AG04449 (cell line): ENCODE measurements at regions of chr1 and their contacts with region 1.

Region 1: DNA sequence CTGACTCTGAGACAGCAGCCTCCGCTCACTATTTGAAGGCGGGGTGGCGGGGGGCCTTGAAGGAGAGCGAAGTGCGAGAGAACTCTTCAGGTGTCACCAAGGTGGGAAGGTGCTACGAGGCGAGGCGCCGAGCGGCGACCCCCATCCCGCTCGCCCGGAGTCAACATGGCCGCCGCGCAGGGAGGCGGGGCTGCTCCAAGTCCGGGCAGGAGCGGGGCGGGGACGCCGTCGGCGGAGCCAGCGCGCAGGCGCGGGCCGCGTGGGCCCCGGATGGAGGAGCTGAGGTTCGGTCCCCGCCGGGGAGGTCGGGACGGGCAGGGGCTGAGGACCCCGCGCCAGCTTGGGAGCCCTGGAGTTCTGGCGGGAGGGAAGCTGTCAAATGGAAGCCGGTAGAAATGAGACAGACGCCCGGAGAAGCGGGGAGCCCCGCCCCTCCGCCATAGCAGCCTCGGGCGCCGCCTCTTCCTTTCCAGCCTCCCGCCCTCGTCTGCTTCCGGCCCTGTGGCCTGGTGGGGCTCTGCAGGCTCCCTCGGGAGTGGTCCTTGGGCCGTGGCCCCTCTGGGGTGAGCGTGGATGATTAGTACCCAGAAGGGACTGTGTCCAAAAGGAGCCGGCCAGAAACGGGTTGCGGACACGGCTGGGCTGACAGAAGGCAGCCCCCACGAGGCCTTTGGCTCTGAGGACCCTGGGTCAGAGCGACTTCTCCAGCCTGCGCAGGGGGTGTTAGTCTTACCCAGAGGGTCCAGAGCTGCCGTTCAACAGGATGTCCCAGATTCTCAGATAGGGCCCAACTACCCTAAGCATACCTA is at the start of gene PIGV:
- DNase-seq: no peak
- H3K4me3 ChIP-seq: peak within 1 kb of the TSS; percentile 73
- CTCF ChIP-seq: no peak

Region 2: GRCh38 chr1:26500488-26501175 is 287.3 kb before region 1 on chr1:
- CTCF ChIA-PET with region 1: interaction called, 18 read pairs
- POLR2A ChIA-PET with region 1: no interaction called
- DNase-seq: no peak
- H3K4me3 ChIP-seq: peak overlapping the region; percentile 76
- CTCF ChIP-seq: no peak

Region 3: GRCh38 chr1:26677306-26678115 is 110.4 kb before region 1 on chr1:
- CTCF ChIA-PET with region 1: interaction called, 34 read pairs
- POLR2A ChIA-PET with region 1: no interaction called
- DNase-seq: no peak
- H3K4me3 ChIP-seq: no peak overlapping the region
- CTCF ChIP-seq: peak; percentile 43

Region 4: DNA sequence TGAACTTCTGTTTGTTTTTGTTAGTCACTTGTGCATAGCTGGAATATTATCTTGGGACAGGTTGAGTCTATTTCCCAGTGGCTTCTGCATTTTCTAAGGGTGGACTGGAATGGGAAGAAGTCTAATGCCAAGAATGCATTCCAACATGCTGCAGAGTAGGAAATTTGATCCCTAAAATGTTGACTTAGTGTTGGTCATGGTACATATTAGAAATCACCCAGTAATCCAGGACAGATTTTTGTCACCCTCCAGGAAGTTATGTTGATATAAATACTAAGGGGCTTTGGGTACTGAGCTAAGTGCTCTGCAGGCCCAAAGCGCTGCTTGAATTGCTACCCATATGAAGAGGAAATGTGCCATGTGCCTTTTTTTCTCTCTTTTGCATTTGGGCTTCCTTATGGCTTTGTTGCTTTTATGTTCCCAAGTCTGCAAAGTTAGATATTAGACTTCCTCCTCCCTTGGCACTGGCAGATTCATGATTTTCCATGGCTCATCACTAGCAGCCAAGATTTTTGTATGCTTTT is 82.1 kb before region 1 on chr1:
- CTCF ChIA-PET with region 1: interaction called, 51 read pairs
- POLR2A ChIA-PET with region 1: interaction called, 4 read pairs
- DNase-seq: peak; percentile 77
- H3K4me3 ChIP-seq: no peak overlapping the region
- CTCF ChIP-seq: no peak

Region 5: GRCh38 chr1:26771643-26772321 is 16.1 kb before region 1 on chr1:
- CTCF ChIA-PET with region 1: interaction called, 32 read pairs
- POLR2A ChIA-PET with region 1: interaction called, 8 read pairs
- DNase-seq: peak; percentile 95
- H3K4me3 ChIP-seq: no peak overlapping the region
- CTCF ChIP-seq: no peak

Region 6: GRCh38 chr1:26811057-26811456 is 23.1 kb after region 1 on chr1:
- CTCF ChIA-PET with region 1: interaction called, 25 read pairs
- POLR2A ChIA-PET with region 1: interaction called, 3 read pairs
- DNase-seq: no peak
- H3K4me3 ChIP-seq: no peak overlapping the region
- CTCF ChIP-seq: no peak

Region 7: DNA sequence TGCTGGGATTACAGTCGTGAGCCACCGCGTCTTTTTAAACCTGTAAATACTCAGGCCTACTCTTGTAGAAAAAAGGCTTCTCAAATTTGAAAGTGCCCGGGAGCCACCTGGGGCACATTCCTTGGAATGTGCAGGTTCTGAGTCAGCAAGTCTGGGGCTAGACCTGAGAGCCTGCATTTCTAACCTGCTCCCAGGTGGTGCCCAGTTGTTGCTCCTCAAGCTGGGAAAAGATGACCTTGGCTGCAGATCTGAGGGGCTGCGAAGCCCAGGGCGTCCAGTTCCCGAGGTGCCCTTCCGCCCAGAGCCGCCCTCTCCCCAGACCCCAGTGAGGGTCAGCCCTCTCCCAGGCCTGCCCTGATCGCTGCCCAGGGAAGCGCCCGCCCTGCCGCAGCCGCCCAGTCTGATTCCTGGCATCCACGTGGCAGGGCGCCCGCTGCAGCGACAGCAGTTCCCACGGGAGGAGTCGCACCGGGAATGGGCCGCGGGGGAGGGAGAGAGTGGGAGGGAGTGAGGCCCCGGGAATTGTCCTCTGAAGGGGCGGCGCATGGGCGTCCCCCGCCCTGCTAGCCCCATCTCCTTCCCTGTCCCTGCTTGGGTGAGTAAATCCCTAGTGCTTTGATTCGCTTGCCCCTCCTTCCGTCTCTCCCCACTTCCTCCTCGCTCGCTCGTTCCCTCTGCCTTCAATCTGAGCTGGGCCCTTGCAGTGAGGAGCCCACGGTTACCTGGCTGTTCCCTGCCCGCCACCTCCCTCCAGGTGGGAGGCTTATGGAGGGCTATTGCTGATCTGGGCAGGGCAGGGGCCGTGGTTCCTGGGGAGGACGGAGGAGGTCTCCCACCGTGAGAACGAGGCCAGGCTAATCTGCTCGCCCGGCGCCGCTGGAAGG is 243.6 kb after region 1 on chr1:
- CTCF ChIA-PET with region 1: no interaction called
- POLR2A ChIA-PET with region 1: no interaction called
- DNase-seq: no peak
- H3K4me3 ChIP-seq: peak overlapping the region; percentile 37
- CTCF ChIP-seq: no peak